OCI-LY7 (cell line): ENCODE measurements at regions of chr1 and their contacts with region 1.

Region 1: GRCh38 chr1:62746085-62746808 is 37.7 kb upstream of the ATG4C start:
- DNase-seq: peak; percentile 50
- H3K4me3 ChIP-seq: no peak overlapping the region
- H3K27ac ChIP-seq: no peak overlapping the region
- H3K4me1 ChIP-seq: no peaks in the 10 kb centered on the region
- CTCF ChIP-seq: peak; percentile 84

Region 2: GRCh38 chr1:62175568-62176179 is 570.6 kb before region 1 on chr1:
- CTCF ChIA-PET with region 1: no interaction called
- POLR2A ChIA-PET with region 1: no interaction called
- intact Hi-C with region 1: loop called (anchors 1 kb)
- DNase-seq: peak; percentile 44
- H3K4me3 ChIP-seq: no peak overlapping the region
- H3K27ac ChIP-seq: no peak overlapping the region
- H3K4me1 ChIP-seq: no peaks in the 10 kb centered on the region
- CTCF ChIP-seq: peak; percentile 87

Region 3: GRCh38 chr1:62407405-62408009 is 338.7 kb before region 1 on chr1:
- CTCF ChIA-PET with region 1: no interaction called
- POLR2A ChIA-PET with region 1: no interaction called
- intact Hi-C with region 1: loop called (anchors 10 kb)
- DNase-seq: peak; percentile 61
- H3K4me3 ChIP-seq: no peak overlapping the region
- H3K27ac ChIP-seq: no peak overlapping the region
- H3K4me1 ChIP-seq: no peaks in the 10 kb centered on the region
- CTCF ChIP-seq: peak; percentile 93

Region 4: GRCh38 chr1:62530516-62531154 is 215.6 kb before region 1 on chr1:
- CTCF ChIA-PET with region 1: interaction called, 3 read pairs
- POLR2A ChIA-PET with region 1: interaction called, 4 read pairs
- intact Hi-C with region 1: loop called (anchors 1 kb)
- DNase-seq: peak; percentile 65
- H3K4me3 ChIP-seq: no peak overlapping the region
- H3K27ac ChIP-seq: no peak overlapping the region
- H3K4me1 ChIP-seq: no peaks in the 10 kb centered on the region
- CTCF ChIP-seq: peak; percentile 84

Region 5: GRCh38 chr1:62869217-62869754 is 123.0 kb after region 1 on chr1:
- CTCF ChIA-PET with region 1: no interaction called
- POLR2A ChIA-PET with region 1: no interaction called
- intact Hi-C with region 1: no loop called
- DNase-seq: no peak
- H3K4me3 ChIP-seq: no peak overlapping the region
- H3K27ac ChIP-seq: no peak overlapping the region
- H3K4me1 ChIP-seq: no peaks in the 10 kb centered on the region
- CTCF ChIP-seq: no peak